Spleen (tissue), 13 donors: ENCODE measurements at regions of chr13 and their contacts with region 1.

Region 1: DNA sequence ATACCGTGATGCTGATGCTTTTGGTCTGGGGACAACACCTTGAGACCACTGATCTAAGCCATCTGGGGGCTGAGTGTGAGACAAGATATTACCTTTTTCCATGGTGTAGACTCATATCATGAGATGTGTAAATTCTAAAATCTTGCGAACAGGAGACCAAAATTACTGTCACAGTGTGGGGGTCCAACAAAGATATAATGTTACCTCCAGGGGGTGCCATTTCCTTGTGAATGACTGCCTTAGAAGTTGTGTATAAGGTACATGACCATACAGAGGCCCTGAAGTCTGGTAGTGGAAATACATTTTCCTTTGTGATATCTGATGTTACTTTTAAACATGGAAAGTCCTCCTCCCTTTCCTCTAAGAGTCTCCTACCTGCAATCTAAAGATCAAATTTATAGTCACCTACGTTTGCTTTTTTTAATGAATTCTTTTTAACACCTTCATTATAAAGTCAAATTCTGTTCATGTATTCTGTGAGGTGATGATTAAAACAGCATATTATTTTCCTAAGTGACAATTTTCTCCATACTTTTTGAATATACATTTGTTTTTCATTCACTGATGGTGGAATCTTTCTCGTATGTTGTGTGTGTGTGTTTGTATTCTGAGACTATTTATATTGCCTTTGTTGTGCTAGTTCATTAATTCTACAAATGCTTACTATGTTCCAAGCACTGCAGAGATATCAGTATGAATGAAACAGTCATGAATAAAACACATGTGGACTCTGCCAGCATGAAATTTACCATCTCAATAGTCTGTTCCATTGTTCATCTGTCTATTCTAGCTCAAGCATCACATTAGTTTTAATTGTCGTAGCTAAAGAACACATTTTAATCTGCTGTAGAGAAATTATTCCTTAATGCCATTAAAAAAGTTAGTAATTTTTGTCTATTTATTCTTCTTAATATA is 113.7 kb downstream of the RFC3 start:
- DNase-seq: no peak
- H3K4me3 ChIP-seq: no peak overlapping the region
- H3K27ac ChIP-seq: no peak overlapping the region
- H3K4me1 ChIP-seq: no peaks in the 10 kb centered on the region
- H3K27me3 ChIP-seq: no peaks in the 10 kb centered on the region
- CTCF ChIP-seq: peak in 5 of 11 experiments; percentile 39 to 49 (median 46)
- POLR2A ChIP-seq: no peak

Region 2: GRCh38 chr13:35157143-35157755 is 1225.6 kb after region 1 on chr13:
- intact Hi-C with region 1: loop called (anchors 10 kb)
- DNase-seq: no peak
- H3K4me3 ChIP-seq: no peak overlapping the region
- H3K27ac ChIP-seq: no peak overlapping the region
- H3K4me1 ChIP-seq: peaks cover 0 to 6% (median 1%) of the 10 kb centered on the region in 6 donors
- H3K27me3 ChIP-seq: no peaks in the 10 kb centered on the region
- CTCF ChIP-seq: peak in 9 of 11 experiments; percentile 8 to 67 (median 56)
- POLR2A ChIP-seq: no peak